Naive thymus-derived CD4-positive, alpha-beta T cell (primary cell): ENCODE measurements at regions of chr2 and their contacts with region 1.

Region 1: DNA sequence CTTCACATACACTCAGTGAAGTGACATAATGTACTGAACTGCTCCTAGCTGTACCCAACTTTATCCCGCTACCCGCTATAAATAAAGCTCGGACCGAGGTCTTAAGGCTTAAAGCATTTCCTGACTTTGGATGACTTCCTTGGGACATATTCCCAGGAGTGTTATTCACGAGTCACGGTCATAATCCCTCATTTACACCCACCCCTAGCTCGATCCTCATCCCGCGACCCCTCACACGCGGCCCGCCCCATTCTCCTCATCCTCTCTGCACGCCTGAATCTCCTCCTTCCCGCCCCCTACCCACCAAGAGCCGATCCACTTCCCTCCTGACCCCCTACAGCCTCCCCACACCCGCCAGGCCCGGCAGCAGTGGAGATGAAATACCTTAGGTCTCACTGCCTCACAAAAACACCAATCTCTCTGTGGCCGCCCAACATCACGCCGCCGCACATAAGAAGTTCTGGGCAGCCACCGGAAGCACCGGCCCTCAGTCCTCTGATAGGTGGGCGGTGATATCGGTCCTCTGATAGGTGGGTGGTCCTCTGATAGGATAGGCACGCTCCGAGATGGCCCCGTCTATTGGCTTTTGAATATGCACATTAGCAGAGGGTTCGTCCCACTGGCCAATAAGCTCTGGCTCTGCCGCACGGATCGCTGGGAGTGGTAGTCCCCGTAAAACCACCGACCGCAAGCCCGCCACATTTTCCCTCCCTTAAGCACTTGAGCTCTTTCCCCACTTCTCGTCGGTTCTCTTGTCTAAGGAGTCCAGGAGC is at the start of gene WDCP:
- DNase-seq: peak; percentile 67 to 95 (median 90)
- ATAC-seq: peak; percentile 100
- H3K4me3 ChIP-seq: peak within 1 kb of the TSS; percentile 81
- H3K4me3 Mint-ChIP-seq: peak within 1 kb of the TSS; percentile 86 to 99 (median 95)
- H3K27ac ChIP-seq: peak within 1 kb of the TSS; percentile 74
- H3K27ac Mint-ChIP-seq: peak within 1 kb of the TSS; percentile 73 to 96 (median 88)
- H3K4me1 ChIP-seq: peaks cover 0 to 4% of the 10 kb centered on the region in 2 donors
- H3K4me1 Mint-ChIP-seq: peaks cover 17 to 42% (median 35%) of the 10 kb centered on the region in 7 donors
- H3K27me3 ChIP-seq: peaks cover 0 to 8% of the 10 kb centered on the region in 2 donors
- H3K27me3 Mint-ChIP-seq: peaks cover 5 to 12% (median 9%) of the 10 kb centered on the region in 5 donors
- total RNA-seq, gene WDCP: 3.9 to 22.1 (median 17.8) TPM

Region 2: DNA sequence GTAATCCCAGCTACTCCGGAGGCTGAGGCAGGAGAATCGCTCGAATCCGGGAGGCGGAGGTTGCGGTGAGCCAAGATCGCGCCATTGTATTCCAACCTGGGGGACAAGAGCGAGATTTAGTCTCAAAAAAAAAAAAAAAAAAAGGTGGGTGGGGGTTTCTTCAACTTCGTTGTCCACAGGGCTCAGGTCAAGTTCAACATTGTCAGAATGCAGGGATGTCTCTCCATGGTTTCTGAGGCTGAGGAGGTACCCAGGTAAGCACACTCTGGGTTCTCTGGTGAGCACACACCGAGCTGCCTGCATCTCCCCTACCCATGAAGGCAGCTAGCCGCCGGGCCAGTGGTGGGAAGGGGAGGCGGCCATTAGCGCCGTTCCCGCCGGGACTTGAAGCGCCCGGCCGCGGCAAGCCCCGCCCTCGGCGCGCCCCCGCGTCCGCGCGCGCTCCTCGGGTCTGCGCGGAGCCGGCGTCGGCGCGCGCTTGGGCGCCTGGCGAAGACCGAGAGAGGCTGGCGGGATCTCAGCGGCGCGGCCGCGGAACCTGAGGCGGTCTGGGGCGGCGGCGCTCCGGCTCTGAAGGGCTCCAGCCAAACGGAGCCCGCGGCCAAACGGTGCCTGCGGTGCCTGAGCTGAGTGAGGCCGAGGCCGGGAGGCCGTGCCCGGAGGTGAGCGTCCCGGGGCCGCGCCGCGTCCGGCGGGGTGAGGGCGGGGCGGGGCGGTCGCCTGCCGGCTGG is 107.0 kb before region 1 on chr2 and contains the start of gene UBXN2A:
- CTCF ChIA-PET with region 1: interaction called, 3 read pairs
- POLR2A ChIA-PET with region 1: interaction called, 3 read pairs
- intact Hi-C with region 1: loop called (anchors 1 kb)
- DNase-seq: peak; percentile 59 to 85 (median 79)
- ATAC-seq: peak; percentile 96
- H3K4me3 ChIP-seq: peak within 1 kb of the TSS; percentile 94
- H3K4me3 Mint-ChIP-seq: peak within 1 kb of the TSS; percentile 85 to 97 (median 92)
- H3K27ac ChIP-seq: peak within 1 kb of the TSS; percentile 76
- H3K27ac Mint-ChIP-seq: peak within 1 kb of the TSS; percentile 85 to 94 (median 86)
- H3K4me1 ChIP-seq: peaks cover 6 to 14% of the 10 kb centered on the region in 2 donors
- H3K4me1 Mint-ChIP-seq: peaks cover 23 to 40% (median 34%) of the 10 kb centered on the region in 7 donors
- H3K27me3 ChIP-seq: no peaks in the 10 kb centered on the region
- H3K27me3 Mint-ChIP-seq: peaks cover 0 to 16% (median 7%) of the 10 kb centered on the region in 5 donors
- total RNA-seq, gene UBXN2A: 11.5 to 13.5 (median 12.4) TPM

Region 3: DNA sequence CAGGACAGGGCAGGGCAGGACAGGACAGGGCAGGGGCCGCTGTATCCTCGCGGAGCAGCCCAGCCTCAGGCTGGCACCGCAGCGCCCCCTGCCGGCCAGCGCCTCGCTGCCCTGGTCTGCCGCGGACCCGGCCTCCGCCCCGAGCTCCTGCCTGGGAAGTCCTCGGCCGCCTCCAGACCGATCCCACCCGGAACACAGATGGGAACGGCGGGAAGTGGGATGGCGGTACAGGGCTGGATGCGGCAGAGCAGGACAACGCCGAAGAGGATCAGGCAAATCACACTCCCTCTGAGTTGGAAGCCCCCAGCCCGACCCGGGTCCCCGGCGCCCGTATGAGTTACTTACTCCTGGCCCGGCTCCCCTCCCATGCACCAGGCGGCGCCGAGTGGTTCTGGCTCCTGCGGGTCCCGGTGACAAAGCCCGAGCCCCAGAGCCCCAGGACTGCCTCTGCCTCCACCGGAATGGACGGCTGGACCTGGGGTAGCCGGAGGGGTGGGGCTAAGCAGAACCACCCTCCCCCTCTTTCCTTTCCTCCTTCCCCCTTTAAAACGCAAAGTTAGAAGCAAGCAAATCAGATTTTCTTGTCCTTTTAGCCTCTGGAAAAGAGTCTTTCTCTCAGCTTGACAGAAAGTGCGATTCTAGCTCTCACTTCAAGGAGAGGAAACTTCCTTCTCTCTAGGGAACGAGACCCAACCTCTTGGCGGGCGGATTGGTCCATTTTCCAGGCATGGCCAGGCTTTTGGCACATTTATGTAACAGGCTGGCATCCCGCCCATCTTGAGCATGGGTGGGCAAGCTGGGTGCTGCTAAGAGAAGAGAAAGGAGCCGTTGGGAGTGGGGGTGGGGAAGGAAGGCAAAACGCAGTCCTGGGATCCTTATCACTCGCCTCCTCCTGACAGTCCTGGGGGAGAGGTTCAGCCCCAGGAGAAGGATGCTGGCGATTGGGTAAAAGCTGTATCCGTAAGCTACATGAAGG is 37.6 kb after region 1 on chr2 and contains the start of gene TP53I3:
- CTCF ChIA-PET with region 1: interaction called, 3 read pairs
- POLR2A ChIA-PET with region 1: interaction called, 3 read pairs
- intact Hi-C with region 1: loop called (anchors 2 kb)
- DNase-seq: peak; percentile 59 to 93 (median 80)
- ATAC-seq: peak; percentile 96
- H3K4me3 ChIP-seq: peak within 1 kb of the TSS; percentile 61
- H3K4me3 Mint-ChIP-seq: peak within 1 kb of the TSS; percentile 81 to 93 (median 88)
- H3K27ac ChIP-seq: peak within 1 kb of the TSS; percentile 28
- H3K27ac Mint-ChIP-seq: peak within 1 kb of the TSS in 8 of 9 donors; percentile 49 to 83 (median 65)
- H3K4me1 ChIP-seq: peaks cover 5 to 8% of the 10 kb centered on the region in 2 donors
- H3K4me1 Mint-ChIP-seq: peaks cover 10 to 21% (median 17%) of the 10 kb centered on the region in 7 donors
- H3K27me3 ChIP-seq: no peaks in the 10 kb centered on the region
- H3K27me3 Mint-ChIP-seq: no peaks in the 10 kb centered on the region
- total RNA-seq, gene TP53I3: 0.49 to 5.0 (median 1.7) TPM

Region 4: GRCh38 chr2:24123195-24123921 is 76.2 kb after region 1 on chr2 and contains the starts of genes FAM228B and PFN4:
- CTCF ChIA-PET with region 1: no interaction called
- POLR2A ChIA-PET with region 1: no interaction called
- intact Hi-C with region 1: loop called in 1 of 2 experiments (anchors 5 kb)
- DNase-seq: peak; percentile 12 to 76 (median 36)
- ATAC-seq: peak; percentile 93
- H3K4me3 ChIP-seq: peak within 1 kb of the TSS; percentile 56
- H3K4me3 Mint-ChIP-seq: peak within 1 kb of the TSS; percentile 74 to 91 (median 82)
- H3K27ac ChIP-seq: peak within 1 kb of the TSS; percentile 49
- H3K27ac Mint-ChIP-seq: peak within 1 kb of the TSS; percentile 36 to 79 (median 67)
- H3K4me1 ChIP-seq: peaks cover 0 to 5% of the 10 kb centered on the region in 2 donors
- H3K4me1 Mint-ChIP-seq: peaks cover 10 to 15% (median 15%) of the 10 kb centered on the region in 7 donors
- H3K27me3 ChIP-seq: no peaks in the 10 kb centered on the region
- H3K27me3 Mint-ChIP-seq: peaks cover 0 to 2% (median 0%) of the 10 kb centered on the region in 5 donors
- total RNA-seq, gene FAM228B: 7.8 to 27.5 (median 24.8) TPM
- total RNA-seq, gene PFN4: not detected

Region 5: DNA sequence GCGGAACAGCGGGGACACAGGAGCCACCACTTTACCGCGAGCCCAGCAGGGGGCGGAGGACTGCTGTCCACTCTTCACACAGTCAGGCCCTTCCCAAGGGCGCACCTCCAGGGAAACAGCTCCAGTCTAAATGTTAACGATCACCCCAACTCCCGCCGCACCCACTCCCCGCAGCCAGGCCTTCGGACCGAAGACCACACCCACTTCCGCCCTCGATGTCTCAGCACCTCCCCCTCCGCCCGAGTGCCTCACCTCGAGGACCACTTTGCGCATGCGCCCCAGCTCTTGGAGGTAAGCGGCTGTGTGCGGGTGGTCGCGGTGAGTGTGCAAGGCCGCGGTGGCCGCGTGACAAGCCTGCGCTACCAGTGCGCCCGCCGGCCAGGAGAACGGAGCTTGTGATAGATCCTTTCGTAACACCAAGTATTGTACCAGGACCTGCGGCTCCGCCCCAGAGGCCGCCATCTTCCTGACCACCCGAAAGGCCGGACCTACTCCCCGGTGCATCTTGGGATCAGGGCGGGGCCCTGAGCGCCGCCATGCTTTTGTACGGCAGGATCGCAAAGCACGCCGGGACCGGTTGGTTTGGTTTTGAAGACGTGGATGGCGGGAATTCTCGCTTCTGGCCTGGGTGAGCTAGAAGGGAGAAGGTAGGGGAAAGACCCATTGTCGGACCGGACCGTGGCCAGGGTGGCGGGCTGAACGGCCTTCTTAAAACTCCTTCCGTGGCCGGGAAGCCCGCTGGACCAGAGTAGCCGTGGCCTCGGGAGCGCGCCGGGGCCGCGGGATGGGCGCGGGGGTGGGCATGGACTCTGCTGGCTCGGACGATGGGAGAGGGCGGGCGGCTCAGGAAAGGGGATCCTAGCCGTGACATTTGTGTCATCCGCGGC is 746.0 kb after region 1 on chr2 and contains the starts of genes CENPO and PTRHD1:
- CTCF ChIA-PET with region 1: no interaction called
- POLR2A ChIA-PET with region 1: no interaction called
- intact Hi-C with region 1: loop called in 1 of 2 experiments (anchors 1 kb)
- DNase-seq: peak; percentile 93 to 99 (median 97)
- ATAC-seq: peak; percentile 98
- H3K4me3 ChIP-seq: peak within 1 kb of the TSS; percentile 97
- H3K4me3 Mint-ChIP-seq: peak within 1 kb of the TSS; percentile 95 to 100 (median 98)
- H3K27ac ChIP-seq: peak within 1 kb of the TSS; percentile 96
- H3K27ac Mint-ChIP-seq: peak within 1 kb of the TSS; percentile 99 to 100 (median 99)
- H3K4me1 ChIP-seq: peaks cover 6 to 10% of the 10 kb centered on the region in 2 donors
- H3K4me1 Mint-ChIP-seq: peaks cover 5 to 53% (median 20%) of the 10 kb centered on the region in 7 donors
- H3K27me3 ChIP-seq: no peaks in the 10 kb centered on the region
- H3K27me3 Mint-ChIP-seq: no peaks in the 10 kb centered on the region
- total RNA-seq, gene CENPO: 3.6 to 36.6 (median 6.0) TPM
- total RNA-seq, gene PTRHD1: 14.3 to 31.5 (median 17.1) TPM